GM13976 (cell line): ENCODE measurements at regions of chr17 and their contacts with region 1.

Region 1: GRCh38 chr17:21772321-21772720 is 80.0 kb downstream of the KCNJ18 start:
- DNase-seq: no peak
- CTCF ChIP-seq: no peak

Region 2: DNA sequence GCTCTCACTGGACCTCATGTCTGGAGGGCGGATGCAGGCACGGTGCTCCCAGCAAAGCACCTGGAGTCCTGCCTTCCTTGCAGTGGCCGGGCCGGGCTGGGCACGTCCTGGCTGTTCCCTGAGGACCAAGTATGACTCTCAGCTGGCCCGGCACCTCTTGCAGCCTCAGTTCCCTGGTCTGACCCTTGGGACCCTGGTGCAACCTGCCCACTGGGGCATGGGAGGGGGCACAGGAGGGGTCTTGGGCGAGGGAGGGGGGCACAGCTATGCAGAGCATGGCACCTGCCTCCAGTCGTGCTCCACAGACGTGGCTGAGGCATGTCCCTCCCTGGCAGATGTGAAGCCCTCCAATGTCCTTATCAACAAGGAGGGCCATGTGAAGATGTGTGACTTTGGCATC is 468.2 kb before region 1 on chr17:
- in situ Hi-C with region 1: loop called (anchors 25 kb)
- DNase-seq: peak; percentile 44
- CTCF ChIP-seq: no peak

Region 3: DNA sequence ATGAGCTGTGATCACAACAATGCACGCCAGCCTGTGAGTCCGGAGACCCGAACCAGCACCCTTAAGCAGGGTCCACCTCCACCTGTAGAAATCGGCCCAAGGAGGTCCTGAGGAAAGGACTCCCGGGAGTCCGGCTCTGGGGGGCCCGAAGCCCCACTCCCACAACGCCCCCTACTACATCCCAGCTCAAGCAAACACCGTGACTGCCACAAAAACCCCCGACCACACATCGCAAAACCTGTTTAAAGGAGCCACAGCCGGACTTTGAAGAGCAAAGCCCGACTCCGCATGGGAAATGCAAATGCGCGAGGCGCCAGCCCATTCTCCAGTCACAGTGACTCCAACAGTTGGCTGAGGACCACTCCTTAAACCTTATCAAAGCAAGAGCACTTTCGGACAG is 602.4 kb after region 1 on chr17:
- in situ Hi-C with region 1: no loop called
- DNase-seq: no peak
- CTCF ChIP-seq: no peak